CD4-positive, alpha-beta memory T cell (primary cell): ENCODE measurements at regions of chr6 and their contacts with region 1.

Region 1: GRCh38 chr6:39347906-39348585 is 25.5 kb upstream of the KCNK16 start:
- DNase-seq: peak in 3 of 5 donors; percentile 26 to 33 (median 32)
- H3K4me3 ChIP-seq: no peak overlapping the region
- H3K4me3 Mint-ChIP-seq: no peak overlapping the region
- H3K27ac ChIP-seq: no peak overlapping the region
- H3K27ac Mint-ChIP-seq: no peak overlapping the region
- H3K4me1 ChIP-seq: no peaks in the 10 kb centered on the region
- H3K4me1 Mint-ChIP-seq: peaks cover 0 to 4% (median 0%) of the 10 kb centered on the region in 4 donors
- H3K27me3 ChIP-seq: no peaks in the 10 kb centered on the region
- H3K27me3 Mint-ChIP-seq: peaks cover 3 to 6% of the 10 kb centered on the region in 2 donors

Region 2: DNA sequence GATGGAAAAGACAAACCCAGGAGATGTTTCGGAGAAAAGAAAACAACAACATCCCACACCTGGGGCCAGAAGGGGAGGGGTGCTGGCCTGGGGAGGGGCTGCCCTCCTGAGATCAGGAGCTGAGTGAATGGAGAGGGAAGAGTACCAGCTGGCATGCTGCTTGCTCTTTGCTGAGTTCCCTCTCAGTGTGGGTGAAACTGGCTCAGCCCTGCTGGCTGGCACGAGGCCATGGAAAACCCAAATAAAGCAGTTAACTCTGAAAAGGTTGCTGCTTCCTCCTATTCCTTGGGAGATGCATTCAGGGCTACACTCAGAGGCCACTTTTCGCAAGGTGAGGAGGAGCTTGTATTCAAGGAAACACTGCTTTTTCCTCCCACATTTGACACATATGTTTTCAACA is 17.6 kb before region 1 on chr6:
- CTCF ChIA-PET with region 1: interaction called, 12 read pairs
- POLR2A ChIA-PET with region 1: no interaction called
- intact Hi-C with region 1: no loop called
- DNase-seq: no peak
- H3K4me3 ChIP-seq: no peak overlapping the region
- H3K4me3 Mint-ChIP-seq: no peak overlapping the region
- H3K27ac ChIP-seq: no peak overlapping the region
- H3K27ac Mint-ChIP-seq: no peak overlapping the region
- H3K4me1 ChIP-seq: no peaks in the 10 kb centered on the region
- H3K4me1 Mint-ChIP-seq: no peaks in the 10 kb centered on the region
- H3K27me3 ChIP-seq: no peaks in the 10 kb centered on the region
- H3K27me3 Mint-ChIP-seq: peaks cover 19 to 20% of the 10 kb centered on the region in 2 donors

Region 3: DNA sequence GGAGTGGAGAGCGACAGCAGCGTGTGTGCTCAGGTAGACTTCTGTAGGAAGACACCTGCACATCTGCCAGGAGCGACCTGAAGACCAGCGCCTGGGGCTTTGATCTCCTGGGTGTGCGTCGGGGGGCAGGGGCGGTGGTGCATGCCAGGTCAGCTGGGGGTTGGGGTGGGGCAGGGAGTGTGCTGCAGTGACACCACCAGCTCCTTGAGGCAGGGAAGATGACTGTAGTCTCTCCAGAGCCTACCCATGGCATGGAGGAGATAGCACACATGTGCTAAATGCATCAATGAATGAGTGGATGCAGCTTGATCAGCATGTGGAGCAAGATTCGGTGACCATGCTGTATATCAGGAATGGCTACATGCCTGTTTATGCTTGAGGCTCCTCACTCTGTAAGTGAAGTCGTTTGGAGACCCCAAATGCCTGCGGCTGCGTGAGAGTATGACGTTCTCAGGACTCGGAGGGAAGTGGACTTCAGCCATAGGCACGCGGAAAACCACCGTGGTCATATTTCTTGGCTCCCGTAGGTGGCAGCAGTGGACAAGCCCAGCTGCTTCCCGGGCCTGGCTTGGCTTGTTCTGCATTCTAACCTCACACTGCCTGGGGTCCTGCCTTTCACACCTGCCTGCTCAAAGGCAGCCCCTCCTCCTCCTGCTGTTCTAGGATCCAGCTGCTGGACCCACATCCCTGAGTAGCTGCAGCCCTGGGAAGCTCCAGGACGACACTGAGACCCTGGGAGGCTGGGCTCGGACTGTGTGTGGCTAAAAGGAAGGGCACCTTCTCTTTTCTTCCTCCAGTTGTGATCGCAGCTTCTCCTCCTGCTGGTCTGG is 13.8 kb after region 1 on chr6:
- CTCF ChIA-PET with region 1: interaction called, 12 read pairs
- POLR2A ChIA-PET with region 1: no interaction called
- intact Hi-C with region 1: no loop called
- DNase-seq: peak in 4 of 5 donors; percentile 8 to 29 (median 12)
- H3K4me3 ChIP-seq: no peak overlapping the region
- H3K4me3 Mint-ChIP-seq: peak overlapping the region in 2 of 8 donors; percentile 50 to 57
- H3K27ac ChIP-seq: no peak overlapping the region
- H3K27ac Mint-ChIP-seq: no peak overlapping the region
- H3K4me1 ChIP-seq: no peaks in the 10 kb centered on the region
- H3K4me1 Mint-ChIP-seq: peaks cover 0 to 4% (median 2%) of the 10 kb centered on the region in 4 donors
- H3K27me3 ChIP-seq: no peaks in the 10 kb centered on the region
- H3K27me3 Mint-ChIP-seq: peaks cover 10 to 16% of the 10 kb centered on the region in 2 donors

Region 4: GRCh38 chr6:39416728-39417127 is 68.7 kb after region 1 on chr6:
- CTCF ChIA-PET with region 1: no interaction called
- POLR2A ChIA-PET with region 1: no interaction called
- intact Hi-C with region 1: no loop called
- DNase-seq: no peak
- H3K4me3 ChIP-seq: no peak overlapping the region
- H3K4me3 Mint-ChIP-seq: no peak overlapping the region
- H3K27ac ChIP-seq: no peak overlapping the region
- H3K27ac Mint-ChIP-seq: no peak overlapping the region
- H3K4me1 ChIP-seq: no peaks in the 10 kb centered on the region
- H3K4me1 Mint-ChIP-seq: no peaks in the 10 kb centered on the region
- H3K27me3 ChIP-seq: no peaks in the 10 kb centered on the region
- H3K27me3 Mint-ChIP-seq: peaks cover 1 to 11% of the 10 kb centered on the region in 2 donors

Region 5: GRCh38 chr6:40308533-40309306 is 960.7 kb after region 1 on chr6:
- CTCF ChIA-PET with region 1: no interaction called
- POLR2A ChIA-PET with region 1: no interaction called
- intact Hi-C with region 1: loop called (anchors 5 kb)
- DNase-seq: peak in 2 of 5 donors; percentile 12 to 22
- H3K4me3 ChIP-seq: no peak overlapping the region
- H3K4me3 Mint-ChIP-seq: peak overlapping the region in 1 of 8 donors; percentile 29
- H3K27ac ChIP-seq: no peak overlapping the region
- H3K27ac Mint-ChIP-seq: no peak overlapping the region
- H3K4me1 ChIP-seq: no peaks in the 10 kb centered on the region
- H3K4me1 Mint-ChIP-seq: no peaks in the 10 kb centered on the region
- H3K27me3 ChIP-seq: no peaks in the 10 kb centered on the region
- H3K27me3 Mint-ChIP-seq: peaks cover 13 to 15% of the 10 kb centered on the region in 2 donors

Region 6: DNA sequence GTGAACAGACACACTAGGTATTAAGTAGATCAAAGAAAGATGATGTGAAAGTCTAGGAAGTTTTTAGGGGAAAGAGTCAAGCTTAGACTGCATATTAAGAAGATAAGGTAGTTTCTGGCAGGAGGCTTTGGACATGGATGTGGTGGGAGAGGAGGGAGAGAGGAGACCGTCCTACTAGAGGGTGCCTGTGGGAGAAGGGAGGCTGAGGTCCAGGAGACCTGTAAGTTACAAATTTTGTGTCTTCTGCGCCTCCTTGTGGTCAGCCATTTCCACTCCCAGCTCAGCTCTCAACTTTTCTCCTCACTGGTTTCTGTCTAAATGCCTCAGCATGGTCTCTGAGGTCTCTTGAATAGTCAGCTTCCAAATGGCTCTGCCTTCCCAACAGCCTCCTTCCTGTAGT is 1497.5 kb after region 1 on chr6:
- CTCF ChIA-PET with region 1: no interaction called
- POLR2A ChIA-PET with region 1: no interaction called
- intact Hi-C with region 1: loop called (anchors 5 kb)
- DNase-seq: peak in 3 of 5 donors; percentile 0 to 5 (median 2)
- H3K4me3 ChIP-seq: no peak overlapping the region
- H3K4me3 Mint-ChIP-seq: no peak overlapping the region
- H3K27ac ChIP-seq: no peak overlapping the region
- H3K27ac Mint-ChIP-seq: no peak overlapping the region
- H3K4me1 ChIP-seq: no peaks in the 10 kb centered on the region
- H3K4me1 Mint-ChIP-seq: no peaks in the 10 kb centered on the region
- H3K27me3 ChIP-seq: no peaks in the 10 kb centered on the region
- H3K27me3 Mint-ChIP-seq: peaks cover 17 to 22% of the 10 kb centered on the region in 2 donors

Region 7: DNA sequence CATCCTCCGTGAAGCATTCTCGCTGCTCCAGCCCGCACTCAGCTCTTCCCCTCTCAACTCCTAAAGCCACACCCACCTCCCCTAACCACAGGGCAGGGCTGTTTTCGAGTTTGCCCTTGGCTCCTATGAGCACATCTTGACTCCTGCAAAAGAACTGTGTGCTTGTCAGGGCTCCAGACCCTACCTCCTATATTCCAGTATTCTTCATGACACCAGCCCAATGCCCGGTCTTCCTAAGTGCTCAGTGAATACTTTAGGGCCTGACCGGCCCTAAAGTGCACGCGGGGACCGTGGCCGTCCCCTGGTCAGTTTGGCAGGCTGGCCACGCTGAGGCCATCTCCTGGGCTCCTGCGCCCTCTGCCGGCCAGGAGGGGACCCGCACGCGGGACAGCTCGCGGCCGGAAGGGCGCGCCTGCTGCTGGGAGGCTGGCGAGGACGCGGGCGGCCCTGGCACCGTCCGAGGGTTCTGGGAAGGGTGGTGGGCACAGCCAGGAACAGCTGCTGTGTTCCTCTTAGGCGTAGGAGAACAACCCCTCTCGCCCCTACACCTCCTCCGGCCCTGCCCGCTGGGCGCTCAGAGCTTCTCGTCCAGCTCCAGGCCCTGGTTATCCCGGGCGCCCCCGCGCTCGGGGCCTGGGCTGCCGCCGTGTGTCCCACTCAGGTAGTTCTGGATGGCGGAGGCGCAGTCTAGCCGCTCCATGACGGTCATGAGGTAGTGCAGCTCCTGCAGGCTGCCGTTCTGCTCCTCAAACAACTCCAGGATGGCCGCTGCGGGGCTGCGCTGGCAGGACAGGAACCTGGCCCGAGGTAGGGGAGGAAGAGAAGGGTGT is 1680.0 kb after region 1 on chr6:
- CTCF ChIA-PET with region 1: no interaction called
- POLR2A ChIA-PET with region 1: no interaction called
- intact Hi-C with region 1: loop called (anchors 2 kb)
- DNase-seq: peak; percentile 56 to 79 (median 70)
- H3K4me3 ChIP-seq: peak overlapping the region; percentile 63 to 82
- H3K4me3 Mint-ChIP-seq: peak overlapping the region; percentile 78 to 91 (median 86)
- H3K27ac ChIP-seq: peak overlapping the region; percentile 45
- H3K27ac Mint-ChIP-seq: peak overlapping the region; percentile 68 to 96 (median 89)
- H3K4me1 ChIP-seq: peaks cover 25% of the 10 kb centered on the region
- H3K4me1 Mint-ChIP-seq: peaks cover 19 to 22% (median 20%) of the 10 kb centered on the region in 4 donors
- H3K27me3 ChIP-seq: no peaks in the 10 kb centered on the region
- H3K27me3 Mint-ChIP-seq: no peaks in the 10 kb centered on the region

Region 8: GRCh38 chr6:41182069-41183034 is 1834.3 kb after region 1 on chr6:
- CTCF ChIA-PET with region 1: no interaction called
- POLR2A ChIA-PET with region 1: no interaction called
- intact Hi-C with region 1: loop called (anchors 5 kb)
- DNase-seq: peak; percentile 47 to 65 (median 56)
- H3K4me3 ChIP-seq: no peak overlapping the region
- H3K4me3 Mint-ChIP-seq: no peak overlapping the region
- H3K27ac ChIP-seq: no peak overlapping the region
- H3K27ac Mint-ChIP-seq: peak overlapping the region in 1 of 7 donors; percentile 2
- H3K4me1 ChIP-seq: peaks cover 7% of the 10 kb centered on the region
- H3K4me1 Mint-ChIP-seq: peaks cover 7 to 14% (median 10%) of the 10 kb centered on the region in 4 donors
- H3K27me3 ChIP-seq: no peaks in the 10 kb centered on the region
- H3K27me3 Mint-ChIP-seq: peaks cover 3 to 6% of the 10 kb centered on the region in 2 donors